Posterior vena cava (tissue), 2 donors: ENCODE measurements at regions of chr13 and their contacts with region 1.

Region 1: DNA sequence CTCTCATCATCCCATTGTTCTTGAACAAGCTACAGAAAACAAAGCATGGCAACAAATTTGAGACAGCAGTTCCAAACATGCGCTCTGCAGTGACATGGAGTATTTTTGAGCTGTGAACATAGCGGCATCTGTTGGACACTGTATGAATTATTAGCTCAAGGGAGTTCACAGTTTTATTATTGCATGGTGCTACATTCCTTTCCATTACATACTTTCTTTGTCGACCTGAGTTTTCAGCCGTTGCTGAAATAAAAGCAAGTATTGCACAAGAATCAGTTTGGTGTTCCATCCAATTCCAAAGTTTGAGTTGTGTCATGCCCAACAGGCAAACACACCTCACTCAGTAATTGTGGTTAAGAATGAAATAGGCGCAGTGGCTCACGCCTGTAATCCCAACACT is 30.1 kb upstream of the METTL21C start:
- DNase-seq: no peak

Region 2: GRCh38 chr13:101942038-101942437 is 782.9 kb before region 1 on chr13:
- intact Hi-C with region 1: no loop called
- DNase-seq: no peak

Region 3: DNA sequence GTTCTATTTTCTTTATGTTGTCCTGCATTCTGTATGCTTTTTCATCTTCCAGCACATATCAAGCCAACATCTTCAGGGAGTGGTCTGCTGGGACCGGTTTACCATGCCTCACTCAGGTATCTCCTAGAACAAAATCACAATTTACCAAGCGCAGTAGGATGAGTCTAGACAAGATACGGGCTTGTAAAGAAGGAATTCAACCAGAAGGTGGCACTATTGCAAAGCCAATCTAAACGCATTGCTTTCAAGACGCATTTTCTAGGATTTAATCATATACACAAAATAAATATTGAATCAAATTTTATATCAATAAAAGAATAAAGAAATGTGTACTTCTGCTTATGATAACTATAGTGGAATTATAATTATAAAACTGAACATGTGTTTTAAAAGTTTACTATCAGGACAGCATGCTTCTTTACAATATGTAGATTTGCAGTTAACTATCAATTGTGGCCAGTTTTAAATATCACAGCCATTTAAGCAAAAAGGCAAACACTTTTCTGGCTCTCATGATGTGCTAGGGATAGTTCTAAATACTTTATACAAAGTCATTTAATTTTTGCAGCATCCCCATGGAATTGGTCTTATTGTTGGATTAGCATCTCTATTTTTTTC is 144.3 kb before region 1 on chr13:
- intact Hi-C with region 1: loop called in 1 of 2 experiments (anchors 5 kb)
- DNase-seq: no peak

Region 4: GRCh38 chr13:102596147-102597028 is 128.5 kb before region 1 on chr13 and contains the start of gene TPP2:
- intact Hi-C with region 1: loop called (anchors 5 kb)
- DNase-seq: peak; percentile 100
- total RNA-seq, gene TPP2: 32.7 to 37.2 TPM

Region 5: DNA sequence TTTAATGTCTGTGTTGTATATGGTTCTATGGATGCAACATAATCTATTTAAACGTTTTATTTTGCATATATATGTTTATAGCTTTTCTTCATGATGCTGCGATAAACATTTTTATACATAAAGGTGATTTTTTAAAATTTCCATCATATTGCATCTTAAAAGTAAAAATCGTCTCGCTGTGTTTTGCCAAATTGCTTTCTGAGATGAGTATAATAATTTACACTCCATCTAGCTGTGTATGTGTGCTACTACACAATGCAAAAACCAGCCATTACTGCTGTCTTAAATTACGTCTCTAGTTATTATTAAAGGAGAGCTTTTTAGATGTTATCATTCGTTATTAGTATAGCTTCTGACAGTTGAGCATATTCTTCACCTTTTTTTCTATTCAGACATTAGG is 67.3 kb before region 1 on chr13:
- intact Hi-C with region 1: loop called in 1 of 2 experiments (anchors 10 kb)
- DNase-seq: no peak

Region 6: DNA sequence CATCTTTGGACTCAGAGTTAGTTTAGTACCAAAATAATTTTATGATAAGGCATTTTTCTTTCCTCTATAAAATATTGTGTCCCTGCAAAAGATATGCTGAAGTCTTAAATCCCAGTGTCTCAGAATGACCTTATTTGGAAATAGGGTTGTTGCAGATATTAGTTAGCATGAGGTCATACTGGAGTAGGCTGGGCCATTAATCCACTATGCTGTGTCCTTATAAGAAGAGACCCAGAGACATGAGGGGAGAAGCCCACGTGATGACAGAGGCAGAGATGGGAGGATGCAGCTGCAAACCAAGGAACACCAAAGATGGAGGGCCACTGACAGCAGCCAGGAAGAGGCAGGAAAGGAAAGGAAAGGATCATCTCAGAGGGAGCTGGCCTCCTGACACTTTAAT is 67.5 kb after region 1 on chr13:
- intact Hi-C with region 1: no loop called
- DNase-seq: no peak